ENCODE measurements at regions of chr2 and their contacts with region 1.

Region 1: GRCh38 chr2:216215658-216216390 is 106.7 kb downstream of the XRCC5 start:
- DNase-seq: peak; percentile 40
- ATAC-seq: peak; percentile 48; the same call in 1 of the 2 replicates
- H3K4me3 ChIP-seq: no peak overlapping the region
- H3K27ac ChIP-seq: no peak overlapping the region
- H3K4me1 ChIP-seq: peaks cover 23% of the 10 kb centered on the region
- H3K27me3 ChIP-seq: no peaks in the 10 kb centered on the region
- CTCF ChIP-seq: peak; percentile 40
- POLR2A ChIP-seq: no peak
- RAD21 ChIP-seq: peak; percentile 30

Region 2: GRCh38 chr2:216498418-216499413 is 282.9 kb after region 1 on chr2 and contains the start of gene RPL37A:
- CTCF ChIA-PET with region 1: no interaction called
- POLR2A ChIA-PET with region 1: no interaction called
- dilution Hi-C with region 1: no loop called
- in situ Hi-C with region 1: no loop called
- intact Hi-C with region 1: loop called (anchors 2 kb)
- DNase-seq: peak; percentile 96
- ATAC-seq: peak; percentile 90
- H3K4me3 ChIP-seq: peak within 1 kb of the TSS; percentile 92
- H3K27ac ChIP-seq: peak within 1 kb of the TSS; percentile 89
- H3K4me1 ChIP-seq: peaks cover 11% of the 10 kb centered on the region
- H3K27me3 ChIP-seq: no peaks in the 10 kb centered on the region
- CTCF ChIP-seq: no peak
- POLR2A ChIP-seq: peak; percentile 97
- RAD21 ChIP-seq: no peak
- total RNA-seq, gene RPL37A: 341 and 804 TPM in 2 replicates